HEK293 (cell line): ENCODE measurements at regions of chr1 and their contacts with region 1.

Region 1: DNA sequence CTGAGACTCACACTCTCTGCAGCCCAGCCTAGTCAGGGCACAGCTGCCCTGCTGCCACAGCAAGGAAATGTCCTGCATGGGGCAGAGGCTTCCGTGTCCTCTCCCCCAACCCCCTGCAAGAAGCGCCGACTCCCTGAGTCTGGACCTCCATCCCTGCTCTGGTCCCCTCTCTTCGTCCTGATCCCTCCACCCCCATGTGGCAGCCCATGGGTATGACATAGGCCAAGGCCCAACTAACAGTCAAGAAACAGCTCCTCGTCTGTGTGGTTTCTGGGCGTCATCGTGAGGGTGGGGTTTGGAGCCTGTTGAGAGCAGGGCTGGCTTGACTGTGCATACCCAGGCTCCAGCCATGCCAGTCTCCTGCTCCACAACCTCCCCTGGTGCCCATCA is 19.5 kb downstream of the FAAH start:
- H3K4me3 ChIP-seq: no peak overlapping the region
- H3K27ac ChIP-seq: no peak overlapping the region
- H3K4me1 ChIP-seq: no peaks in the 10 kb centered on the region
- CTCF ChIP-seq: no peak

Region 2: GRCh38 chr1:46401964-46402626 is 11.5 kb before region 1 on chr1:
- CTCF ChIA-PET with region 1: interaction called, 10 read pairs
- POLR2A ChIA-PET with region 1: no interaction called
- H3K4me3 ChIP-seq: no peak overlapping the region
- H3K27ac ChIP-seq: no peak overlapping the region
- H3K4me1 ChIP-seq: no peaks in the 10 kb centered on the region
- CTCF ChIP-seq: no peak

Region 3: GRCh38 chr1:46425726-46426125 is 12.1 kb after region 1 on chr1:
- CTCF ChIA-PET with region 1: interaction called, 19 read pairs
- POLR2A ChIA-PET with region 1: no interaction called
- H3K4me3 ChIP-seq: no peak overlapping the region
- H3K27ac ChIP-seq: no peak overlapping the region
- H3K4me1 ChIP-seq: no peaks in the 10 kb centered on the region
- CTCF ChIP-seq: no peak